Activated CD4-positive, alpha-beta memory T cell treated with anti-CD3 and anti-CD28 coated beads for 36 hours (primary cell): ENCODE measurements at regions of chr2 and their contacts with region 1.

Region 1: DNA sequence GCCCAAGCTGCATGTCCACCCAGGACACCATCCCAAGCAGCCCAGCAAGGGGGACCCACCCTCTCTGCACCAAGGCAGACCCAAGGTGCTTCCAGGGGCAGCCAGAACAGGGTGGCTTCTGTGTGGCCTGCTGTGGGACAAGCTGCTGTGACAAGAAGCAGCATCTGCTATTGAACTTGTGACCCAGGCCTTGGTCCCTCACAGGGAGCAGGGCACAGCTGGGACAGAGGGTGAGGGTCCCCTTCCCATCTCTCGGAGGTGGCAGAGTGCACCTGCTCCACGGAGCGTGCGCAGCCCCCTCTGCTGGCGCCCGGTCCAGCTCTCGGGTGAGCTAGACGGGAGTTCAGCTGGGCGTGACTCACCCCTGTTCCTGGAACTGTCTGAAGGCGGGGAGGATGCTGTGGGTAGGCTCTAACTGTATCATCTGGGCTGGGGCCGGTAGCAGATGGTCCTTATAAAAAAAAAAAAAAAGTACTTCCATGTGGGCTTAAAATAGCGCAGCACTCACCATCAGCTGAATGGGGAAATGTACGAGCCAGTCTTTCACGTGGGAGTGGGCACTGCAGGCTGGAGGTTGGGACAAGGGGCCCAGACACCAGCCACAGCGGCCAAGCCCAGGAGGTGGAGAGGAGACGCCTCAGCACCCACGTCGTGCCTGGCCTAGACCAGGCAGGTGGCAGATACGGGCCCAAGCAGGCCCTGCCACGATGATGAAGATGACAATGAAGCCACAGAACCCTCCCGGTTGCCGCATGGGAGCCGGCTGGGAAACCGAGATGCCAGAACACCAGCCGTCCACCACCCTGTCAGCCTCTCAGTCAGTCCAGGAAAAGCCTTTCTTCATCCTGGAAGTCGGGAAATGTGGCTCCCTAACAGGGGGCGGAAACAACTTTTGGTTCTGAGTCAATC is 136.8 kb upstream of the ID2 start:
- DNase-seq: peak; percentile 96
- H3K4me3 Mint-ChIP-seq: peak overlapping the region; percentile 52
- H3K27ac Mint-ChIP-seq: peak overlapping the region; percentile 100
- H3K4me1 Mint-ChIP-seq: peaks cover 72% of the 10 kb centered on the region
- H3K27me3 Mint-ChIP-seq: no peaks in the 10 kb centered on the region

Region 2: GRCh38 chr2:7825591-7826312 is 719.3 kb before region 1 on chr2:
- CTCF ChIA-PET with region 1: no interaction called
- POLR2A ChIA-PET with region 1: interaction called, 9 read pairs
- intact Hi-C with region 1: loop called (anchors 1 kb)
- DNase-seq: peak; percentile 87
- H3K4me3 Mint-ChIP-seq: no peak overlapping the region
- H3K27ac Mint-ChIP-seq: peak overlapping the region; percentile 89
- H3K4me1 Mint-ChIP-seq: peaks cover 34% of the 10 kb centered on the region
- H3K27me3 Mint-ChIP-seq: peaks cover 3% of the 10 kb centered on the region

Region 3: DNA sequence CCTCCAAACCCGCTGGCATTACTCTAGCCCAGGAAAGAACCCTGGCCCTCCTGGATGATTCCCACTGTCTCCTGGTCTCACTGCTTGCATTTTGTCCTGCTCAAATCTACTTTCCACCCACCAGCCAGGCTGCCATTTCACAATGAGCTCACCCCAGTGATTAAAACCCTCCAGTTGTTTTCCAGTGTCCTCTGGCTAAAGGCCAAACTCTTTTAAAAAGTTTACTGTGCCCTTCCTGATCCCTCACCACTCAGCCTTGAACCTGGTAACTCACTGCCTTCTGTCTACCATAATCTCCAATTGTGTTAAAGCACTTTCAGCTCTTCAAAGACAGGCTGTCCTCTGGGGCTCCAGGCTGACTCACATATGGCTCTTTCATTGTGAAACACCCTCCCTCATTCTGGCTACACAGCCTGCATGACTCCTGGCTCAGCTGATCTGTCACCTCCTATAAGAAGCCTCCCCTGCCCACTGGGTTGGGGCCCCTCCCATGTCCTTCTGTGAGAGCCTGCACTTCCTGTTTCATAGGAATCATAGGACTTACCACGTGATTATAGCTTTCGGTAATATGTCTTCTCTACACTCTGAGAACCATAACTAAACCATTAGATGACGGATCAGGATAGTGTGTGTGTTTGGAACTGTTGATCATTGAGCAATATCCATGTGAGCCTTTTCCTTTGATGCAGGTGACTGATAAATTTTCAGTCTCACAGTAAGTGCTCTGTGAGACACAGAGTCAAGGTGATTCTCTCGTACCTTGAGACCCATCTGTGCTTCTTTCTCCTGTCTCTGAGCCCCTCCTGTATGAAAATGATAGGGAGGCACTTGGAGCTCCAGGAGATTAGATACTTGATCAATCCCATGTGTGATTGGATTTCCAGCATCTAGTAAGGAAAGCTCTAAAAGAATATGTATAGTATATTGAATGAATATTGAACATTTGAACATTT is 454.0 kb before region 1 on chr2:
- CTCF ChIA-PET with region 1: interaction called, 3 read pairs
- POLR2A ChIA-PET with region 1: no interaction called
- intact Hi-C with region 1: loop called (anchors 2 kb)
- DNase-seq: peak; percentile 90
- H3K4me3 Mint-ChIP-seq: no peak overlapping the region
- H3K27ac Mint-ChIP-seq: no peak overlapping the region
- H3K4me1 Mint-ChIP-seq: no peaks in the 10 kb centered on the region
- H3K27me3 Mint-ChIP-seq: no peaks in the 10 kb centered on the region

Region 4: GRCh38 chr2:8408560-8409460 is 136.2 kb before region 1 on chr2:
- CTCF ChIA-PET with region 1: interaction called, 8 read pairs
- POLR2A ChIA-PET with region 1: interaction called, 32 read pairs
- intact Hi-C with region 1: loop called (anchors 1 kb)
- DNase-seq: peak; percentile 91
- H3K4me3 Mint-ChIP-seq: peak overlapping the region; percentile 0
- H3K27ac Mint-ChIP-seq: peak overlapping the region; percentile 79
- H3K4me1 Mint-ChIP-seq: peaks cover 34% of the 10 kb centered on the region
- H3K27me3 Mint-ChIP-seq: no peaks in the 10 kb centered on the region

Region 5: DNA sequence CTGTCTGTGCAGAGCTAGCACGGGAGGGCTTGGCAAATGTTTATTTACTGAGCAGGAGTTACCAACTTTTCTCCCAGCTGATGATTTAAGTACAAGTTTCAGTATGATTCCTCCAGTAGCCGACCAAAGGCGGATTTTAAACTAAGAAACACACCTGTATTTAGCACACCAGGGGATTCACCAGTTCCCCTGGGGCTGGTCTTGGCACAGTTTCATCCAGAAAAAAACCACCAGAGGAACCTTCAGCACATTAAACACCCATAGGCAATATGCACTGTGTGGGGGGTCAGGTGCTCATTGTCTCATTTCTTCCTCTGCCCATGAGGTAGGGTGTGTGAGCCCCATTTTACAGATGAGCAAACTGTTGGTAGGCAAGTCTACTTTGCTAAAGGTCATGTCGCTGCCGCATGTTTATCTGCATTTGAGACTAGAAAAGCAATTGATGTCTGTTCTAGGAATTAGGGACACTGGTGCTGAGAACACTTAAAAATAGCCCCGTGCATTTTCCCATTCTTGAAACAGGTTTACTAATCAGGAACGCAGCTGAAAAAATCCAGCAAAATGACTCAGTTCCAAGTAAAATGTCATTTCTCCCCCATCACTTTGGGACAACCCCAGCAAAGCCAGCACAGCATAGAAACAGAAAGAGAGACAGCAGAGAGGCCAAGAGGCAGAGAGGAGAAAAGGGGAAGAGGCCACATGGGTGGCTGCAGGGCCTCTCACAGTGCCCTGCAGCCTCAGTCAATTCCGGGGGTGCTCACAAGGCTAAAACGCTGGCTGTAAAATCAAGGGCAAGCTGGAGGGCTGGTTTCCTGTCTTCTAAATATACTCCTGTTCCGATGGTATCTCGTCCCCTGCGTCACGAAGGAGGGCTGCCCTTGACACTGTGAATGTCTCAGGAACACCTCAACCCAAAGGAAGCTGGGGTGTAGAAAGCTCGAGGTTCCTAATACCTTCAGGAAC is 30.0 kb before region 1 on chr2:
- CTCF ChIA-PET with region 1: interaction called, 27 read pairs
- POLR2A ChIA-PET with region 1: interaction called, 105 read pairs
- intact Hi-C with region 1: loop called (anchors 1 kb)
- DNase-seq: peak; percentile 82
- H3K4me3 Mint-ChIP-seq: peak overlapping the region; percentile 59
- H3K27ac Mint-ChIP-seq: peak overlapping the region; percentile 98
- H3K4me1 Mint-ChIP-seq: peaks cover 66% of the 10 kb centered on the region
- H3K27me3 Mint-ChIP-seq: no peaks in the 10 kb centered on the region